ENCODE measurements at regions of chr6 and their contacts with region 1.

Region 1: GRCh38 chr6:36094753-36095496 is 35.4 kb upstream of the MAPK13 start:
- DNase-seq: peak; percentile 37
- H3K4me3 ChIP-seq: no peak overlapping the region
- H3K27ac ChIP-seq: no peak overlapping the region
- H3K27me3 ChIP-seq: no peaks in the 10 kb centered on the region
- CTCF ChIP-seq: peak; percentile 97

Region 2: GRCh38 chr6:36027501-36028087 is 67.3 kb before region 1 on chr6 and contains the start of gene MAPK14:
- CTCF ChIA-PET with region 1: interaction called, 129 read pairs
- POLR2A ChIA-PET with region 1: interaction called, 5 read pairs
- DNase-seq: peak; percentile 99
- H3K4me3 ChIP-seq: peak within 1 kb of the TSS; percentile 100
- H3K27ac ChIP-seq: peak within 1 kb of the TSS; percentile 63
- H3K27me3 ChIP-seq: no peaks in the 10 kb centered on the region
- CTCF ChIP-seq: peak; percentile 89
- polyA plus RNA-seq, gene MAPK14: 50.2 and 55.7 TPM in 2 replicates

Region 3: DNA sequence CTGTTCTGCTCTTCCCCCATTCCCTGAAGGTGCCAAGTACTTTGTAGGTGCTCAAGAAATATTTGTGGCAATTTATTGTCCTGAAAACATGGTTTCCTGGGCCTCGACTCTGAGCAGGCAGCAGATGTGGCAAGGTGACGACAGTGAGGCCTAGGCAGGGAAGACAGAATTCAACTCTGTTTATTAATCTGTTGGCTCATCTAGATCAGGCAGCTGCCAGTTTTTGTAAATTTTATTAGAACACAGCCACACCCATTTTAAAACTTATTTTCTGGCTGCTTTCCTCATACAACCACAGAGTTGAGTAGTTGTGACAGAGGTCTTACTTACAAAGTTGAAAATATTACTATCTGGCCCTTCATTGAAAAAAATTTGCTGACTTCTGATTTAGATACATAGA is 42.8 kb before region 1 on chr6:
- CTCF ChIA-PET with region 1: interaction called, 20 read pairs
- POLR2A ChIA-PET with region 1: no interaction called
- DNase-seq: no peak
- H3K4me3 ChIP-seq: no peak overlapping the region
- H3K27ac ChIP-seq: no peak overlapping the region
- H3K27me3 ChIP-seq: no peaks in the 10 kb centered on the region
- CTCF ChIP-seq: no peak

Region 4: DNA sequence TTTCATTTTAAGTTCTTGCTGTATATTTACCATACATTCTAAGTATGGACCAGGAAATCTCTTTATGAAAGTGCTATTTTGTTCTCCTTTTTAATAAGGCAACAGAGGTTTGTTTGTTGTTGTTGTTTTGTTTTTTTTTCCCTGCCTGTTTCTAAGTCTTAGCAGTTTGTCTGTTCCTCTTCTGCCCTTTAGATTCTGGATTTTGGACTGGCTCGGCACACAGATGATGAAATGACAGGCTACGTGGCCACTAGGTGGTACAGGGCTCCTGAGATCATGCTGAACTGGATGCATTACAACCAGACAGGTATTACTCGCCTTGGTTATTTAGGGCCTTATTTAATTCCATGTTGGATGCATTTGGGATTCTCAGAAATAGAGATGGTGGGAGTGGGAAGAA is 19.3 kb before region 1 on chr6:
- CTCF ChIA-PET with region 1: interaction called, 41 read pairs
- POLR2A ChIA-PET with region 1: no interaction called
- DNase-seq: no peak
- H3K4me3 ChIP-seq: no peak overlapping the region
- H3K27ac ChIP-seq: no peak overlapping the region
- H3K27me3 ChIP-seq: no peaks in the 10 kb centered on the region
- CTCF ChIP-seq: no peak

Region 5: GRCh38 chr6:36113049-36113448 is 18.1 kb after region 1 on chr6:
- CTCF ChIA-PET with region 1: interaction called, 22 read pairs
- POLR2A ChIA-PET with region 1: no interaction called
- DNase-seq: no peak
- H3K4me3 ChIP-seq: no peak overlapping the region
- H3K27ac ChIP-seq: no peak overlapping the region
- H3K27me3 ChIP-seq: no peaks in the 10 kb centered on the region
- CTCF ChIP-seq: no peak

Region 6: GRCh38 chr6:36360241-36361054 is 265.5 kb after region 1 on chr6:
- CTCF ChIA-PET with region 1: interaction called, 13 read pairs
- POLR2A ChIA-PET with region 1: no interaction called
- DNase-seq: no peak
- H3K4me3 ChIP-seq: no peak overlapping the region
- H3K27ac ChIP-seq: no peak overlapping the region
- H3K27me3 ChIP-seq: peaks cover 12% of the 10 kb centered on the region
- CTCF ChIP-seq: peak; percentile 78